CD8-positive, alpha-beta T cell (primary cell): ENCODE measurements at regions of chr12 and their contacts with region 1.

Region 1: GRCh38 chr12:53379389-53380103 is 430 bp upstream of the SP1 start:
- DNase-seq: peak in 8 of 9 experiments; percentile 79 to 100 (median 92)
- ATAC-seq: peak; percentile 73
- H3K4me3 ChIP-seq: peak overlapping the region; percentile 64 to 65
- H3K4me3 Mint-ChIP-seq: no peak overlapping the region
- H3K27ac ChIP-seq: peak overlapping the region; percentile 61 to 83
- H3K27ac Mint-ChIP-seq: no peak overlapping the region
- H3K4me1 ChIP-seq: peaks cover 44% of the 10 kb centered on the region
- H3K4me1 Mint-ChIP-seq: peaks cover 35% of the 10 kb centered on the region
- H3K27me3 ChIP-seq: no peaks in the 10 kb centered on the region
- H3K27me3 Mint-ChIP-seq: no peaks in the 10 kb centered on the region
- CTCF ChIP-seq: no peak

Region 2: GRCh38 chr12:53079226-53080117 is 300.1 kb before region 1 on chr12 and contains the start of gene SPRYD3:
- CTCF ChIA-PET with region 1: no interaction called
- POLR2A ChIA-PET with region 1: no interaction called
- intact Hi-C with region 1: loop called in 1 of 2 experiments (anchors 1 kb)
- DNase-seq: peak; percentile 95 to 98 (median 96)
- ATAC-seq: peak; percentile 94
- H3K4me3 ChIP-seq: peak within 1 kb of the TSS; percentile 66 to 92
- H3K4me3 Mint-ChIP-seq: peak within 1 kb of the TSS; percentile 92
- H3K27ac ChIP-seq: peak within 1 kb of the TSS; percentile 75 to 89
- H3K27ac Mint-ChIP-seq: peak within 1 kb of the TSS; percentile 96
- H3K4me1 ChIP-seq: peaks cover 13% of the 10 kb centered on the region
- H3K4me1 Mint-ChIP-seq: peaks cover 41% of the 10 kb centered on the region
- H3K27me3 ChIP-seq: no peaks in the 10 kb centered on the region
- H3K27me3 Mint-ChIP-seq: no peaks in the 10 kb centered on the region
- CTCF ChIP-seq: no peak
- total RNA-seq, gene SPRYD3: 25.1 to 25.6 TPM

Region 3: GRCh38 chr12:53274445-53274844 is 105.1 kb before region 1 on chr12:
- CTCF ChIA-PET with region 1: no interaction called
- POLR2A ChIA-PET with region 1: no interaction called
- intact Hi-C with region 1: no loop called
- DNase-seq: no peak
- ATAC-seq: no peak
- H3K4me3 ChIP-seq: no peak overlapping the region
- H3K4me3 Mint-ChIP-seq: no peak overlapping the region
- H3K27ac ChIP-seq: no peak overlapping the region
- H3K27ac Mint-ChIP-seq: no peak overlapping the region
- H3K4me1 ChIP-seq: no peaks in the 10 kb centered on the region
- H3K4me1 Mint-ChIP-seq: no peaks in the 10 kb centered on the region
- H3K27me3 ChIP-seq: no peaks in the 10 kb centered on the region
- H3K27me3 Mint-ChIP-seq: no peaks in the 10 kb centered on the region
- CTCF ChIP-seq: no peak

Region 4: DNA sequence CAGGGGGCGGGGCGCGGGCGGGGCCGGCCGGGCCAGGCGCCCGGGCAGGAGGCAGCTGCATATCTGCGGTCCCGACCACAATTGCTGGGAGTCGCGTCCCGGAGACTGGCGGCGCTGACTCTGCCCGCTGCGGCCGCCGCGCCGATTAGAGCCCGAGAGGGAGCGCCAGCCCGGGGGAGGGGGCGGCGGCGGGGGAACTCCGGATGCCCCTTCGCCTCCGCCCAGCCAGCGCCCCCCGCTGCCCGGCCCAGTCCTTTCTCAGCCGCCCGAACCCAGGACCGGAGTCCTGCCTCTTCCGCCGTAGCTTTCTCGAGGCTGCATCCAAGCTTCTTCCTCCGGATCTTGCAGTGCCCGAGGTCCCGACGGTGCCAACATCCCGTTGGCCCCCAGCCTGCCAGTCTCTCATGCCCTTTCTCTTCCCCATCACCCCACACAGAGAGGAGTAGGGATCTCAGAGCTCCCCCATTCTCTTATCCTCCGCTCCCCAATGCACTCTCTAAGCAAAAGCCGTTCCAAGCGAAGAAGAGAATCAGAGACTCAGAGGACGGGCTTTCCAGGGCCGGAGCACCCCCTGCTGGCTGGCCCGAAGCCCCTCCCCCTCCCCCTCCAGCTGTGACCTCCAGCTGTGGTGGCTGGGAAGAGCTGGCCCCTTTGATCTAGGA is 34.6 kb before region 1 on chr12:
- CTCF ChIA-PET with region 1: interaction called, 16 read pairs
- POLR2A ChIA-PET with region 1: interaction called, 13 read pairs
- intact Hi-C with region 1: no loop called
- DNase-seq: peak; percentile 44 to 85 (median 70)
- ATAC-seq: peak; percentile 85
- H3K4me3 ChIP-seq: peak overlapping the region; percentile 61 to 72
- H3K4me3 Mint-ChIP-seq: peak overlapping the region; percentile 93
- H3K27ac ChIP-seq: peak overlapping the region; percentile 27 to 47
- H3K27ac Mint-ChIP-seq: peak overlapping the region; percentile 77
- H3K4me1 ChIP-seq: peaks cover 16% of the 10 kb centered on the region
- H3K4me1 Mint-ChIP-seq: peaks cover 15% of the 10 kb centered on the region
- H3K27me3 ChIP-seq: no peaks in the 10 kb centered on the region
- H3K27me3 Mint-ChIP-seq: no peaks in the 10 kb centered on the region
- CTCF ChIP-seq: peak; percentile 58

Region 5: GRCh38 chr12:53414756-53415417 is 35.3 kb after region 1 on chr12:
- CTCF ChIA-PET with region 1: interaction called, 18 read pairs
- POLR2A ChIA-PET with region 1: interaction called, 4 read pairs
- intact Hi-C with region 1: loop called in 1 of 2 experiments (anchors 2 kb)
- DNase-seq: no peak
- ATAC-seq: no peak
- H3K4me3 ChIP-seq: no peak overlapping the region
- H3K4me3 Mint-ChIP-seq: no peak overlapping the region
- H3K27ac ChIP-seq: no peak overlapping the region
- H3K27ac Mint-ChIP-seq: peak overlapping the region; percentile 50
- H3K4me1 ChIP-seq: no peaks in the 10 kb centered on the region
- H3K4me1 Mint-ChIP-seq: peaks cover 30% of the 10 kb centered on the region
- H3K27me3 ChIP-seq: no peaks in the 10 kb centered on the region
- H3K27me3 Mint-ChIP-seq: no peaks in the 10 kb centered on the region
- CTCF ChIP-seq: no peak

Region 6: GRCh38 chr12:53451661-53452158 is 72.2 kb after region 1 on chr12 and contains the start of gene PCBP2:
- CTCF ChIA-PET with region 1: no interaction called
- POLR2A ChIA-PET with region 1: no interaction called
- intact Hi-C with region 1: loop called in 1 of 2 experiments (anchors 2 kb)
- DNase-seq: peak; percentile 94 to 99 (median 98)
- ATAC-seq: peak; percentile 93
- H3K4me3 ChIP-seq: peak within 1 kb of the TSS; percentile 81 to 88
- H3K4me3 Mint-ChIP-seq: peak within 1 kb of the TSS; percentile 99
- H3K27ac ChIP-seq: peak within 1 kb of the TSS; percentile 80 to 95
- H3K27ac Mint-ChIP-seq: peak within 1 kb of the TSS; percentile 99
- H3K4me1 ChIP-seq: peaks cover 27% of the 10 kb centered on the region
- H3K4me1 Mint-ChIP-seq: peaks cover 43% of the 10 kb centered on the region
- H3K27me3 ChIP-seq: no peaks in the 10 kb centered on the region
- H3K27me3 Mint-ChIP-seq: no peaks in the 10 kb centered on the region
- CTCF ChIP-seq: peak; percentile 94
- total RNA-seq, gene PCBP2: 1,250 to 1,255 TPM

Region 7: DNA sequence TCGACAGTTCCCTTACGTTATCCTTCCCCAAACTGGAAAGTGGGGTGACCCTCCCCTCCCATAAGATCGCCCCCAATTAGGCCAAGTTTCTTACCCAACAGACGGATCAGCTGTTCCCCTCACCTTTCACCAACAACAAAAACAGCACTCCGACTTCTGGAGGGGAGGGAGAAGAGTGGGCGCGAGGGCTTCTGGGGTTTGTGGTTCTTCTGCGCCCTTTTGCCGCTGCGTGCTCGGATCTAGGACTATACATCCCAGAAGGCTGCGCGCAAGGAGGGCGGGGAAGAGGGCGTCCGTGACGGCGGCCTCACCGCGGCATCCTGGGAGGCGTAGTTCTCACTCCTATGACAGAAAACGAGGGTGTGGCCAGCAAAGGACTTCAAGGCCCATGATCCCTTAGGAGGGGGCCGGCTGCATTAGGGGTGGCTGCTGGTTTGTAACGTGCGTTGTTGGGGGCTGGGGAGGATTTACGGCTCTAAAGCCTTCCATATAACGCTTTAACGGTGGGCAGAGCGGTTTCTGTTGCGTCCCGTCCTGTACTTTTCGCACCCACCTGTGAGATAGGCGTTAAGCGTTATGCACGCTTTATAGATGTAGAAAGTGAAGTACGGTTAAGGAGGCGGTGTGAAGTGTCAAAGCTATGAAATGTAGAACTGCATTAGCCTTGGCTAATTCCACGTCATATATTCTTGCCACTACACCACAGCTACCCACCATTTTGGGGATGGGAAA is 347.9 kb after region 1 on chr12 and contains the start of gene CALCOCO1:
- CTCF ChIA-PET with region 1: no interaction called
- POLR2A ChIA-PET with region 1: no interaction called
- intact Hi-C with region 1: loop called in 1 of 2 experiments (anchors 2 kb)
- DNase-seq: peak; percentile 95 to 99 (median 97)
- ATAC-seq: peak; percentile 98
- H3K4me3 ChIP-seq: peak within 1 kb of the TSS; percentile 67 to 76
- H3K4me3 Mint-ChIP-seq: peak within 1 kb of the TSS; percentile 95
- H3K27ac ChIP-seq: peak within 1 kb of the TSS; percentile 65 to 72
- H3K27ac Mint-ChIP-seq: peak within 1 kb of the TSS; percentile 92
- H3K4me1 ChIP-seq: peaks cover 18% of the 10 kb centered on the region
- H3K4me1 Mint-ChIP-seq: peaks cover 30% of the 10 kb centered on the region
- H3K27me3 ChIP-seq: no peaks in the 10 kb centered on the region
- H3K27me3 Mint-ChIP-seq: no peaks in the 10 kb centered on the region
- CTCF ChIP-seq: no peak
- total RNA-seq, gene CALCOCO1: 49.2 to 49.5 TPM

Region 8: GRCh38 chr12:54068418-54069070 is 689.0 kb after region 1 on chr12:
- CTCF ChIA-PET with region 1: no interaction called
- POLR2A ChIA-PET with region 1: no interaction called
- intact Hi-C with region 1: no loop called
- DNase-seq: no peak
- ATAC-seq: no peak
- H3K4me3 ChIP-seq: no peak overlapping the region
- H3K4me3 Mint-ChIP-seq: no peak overlapping the region
- H3K27ac ChIP-seq: no peak overlapping the region
- H3K27ac Mint-ChIP-seq: no peak overlapping the region
- H3K4me1 ChIP-seq: no peaks in the 10 kb centered on the region
- H3K4me1 Mint-ChIP-seq: no peaks in the 10 kb centered on the region
- H3K27me3 ChIP-seq: no peaks in the 10 kb centered on the region
- H3K27me3 Mint-ChIP-seq: peaks cover 45% of the 10 kb centered on the region
- CTCF ChIP-seq: no peak

Region 9: GRCh38 chr12:54704202-54704601 is 1324.7 kb after region 1 on chr12:
- CTCF ChIA-PET with region 1: no interaction called
- POLR2A ChIA-PET with region 1: no interaction called
- intact Hi-C with region 1: no loop called
- DNase-seq: no peak
- ATAC-seq: no peak
- H3K4me3 ChIP-seq: no peak overlapping the region
- H3K4me3 Mint-ChIP-seq: no peak overlapping the region
- H3K27ac ChIP-seq: no peak overlapping the region
- H3K27ac Mint-ChIP-seq: no peak overlapping the region
- H3K4me1 ChIP-seq: no peaks in the 10 kb centered on the region
- H3K4me1 Mint-ChIP-seq: no peaks in the 10 kb centered on the region
- H3K27me3 ChIP-seq: no peaks in the 10 kb centered on the region
- H3K27me3 Mint-ChIP-seq: peaks cover 5% of the 10 kb centered on the region
- CTCF ChIP-seq: no peak